Gastrocnemius medialis (tissue), 4 donors: ENCODE measurements at regions of chr1 and their contacts with region 1.

Region 1: DNA sequence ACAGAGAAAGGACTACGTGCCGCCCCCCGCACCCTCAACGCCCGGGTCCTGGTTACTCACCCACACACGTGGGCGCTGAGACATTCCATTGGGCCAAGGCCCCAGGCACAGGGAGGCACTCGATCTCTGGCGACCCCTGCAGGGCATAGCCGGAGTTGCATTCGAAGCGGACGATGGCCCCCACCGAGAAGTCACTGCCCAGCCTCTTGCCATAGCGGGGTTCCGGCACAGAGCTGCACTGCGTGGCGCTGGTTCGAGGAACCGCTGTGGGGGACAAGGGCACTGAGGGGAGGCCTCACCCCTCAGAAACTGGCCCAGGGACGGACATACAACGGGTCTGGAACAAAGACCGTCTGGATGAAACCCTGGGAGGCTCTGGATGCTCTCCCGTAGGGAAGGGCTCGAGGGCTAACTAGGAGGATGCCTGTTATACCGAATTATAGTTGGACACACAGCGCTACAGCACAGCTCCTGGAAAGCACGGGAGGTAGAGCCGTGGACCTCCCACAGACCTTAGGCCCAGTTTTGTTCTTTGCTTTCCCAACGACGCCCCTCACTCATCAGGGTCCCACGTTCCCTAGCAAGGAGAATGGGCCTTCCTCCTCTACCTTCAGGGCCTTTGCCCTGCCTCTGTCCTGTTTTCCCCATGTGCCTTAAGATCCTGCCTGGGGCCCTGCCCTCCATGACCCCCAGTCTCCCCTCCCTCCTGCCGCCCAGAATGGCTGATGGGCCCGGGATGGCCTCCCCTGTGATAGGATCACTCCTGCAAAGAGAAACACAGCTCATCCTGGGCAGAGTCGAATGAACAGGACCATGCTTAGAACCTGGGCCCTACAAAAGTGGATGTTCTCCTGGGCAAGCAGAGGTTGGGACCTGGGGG is 152.8 kb downstream of the ZSCAN20 start:
- DNase-seq: no peak
- ATAC-seq: no peak
- H3K4me3 ChIP-seq: no peak overlapping the region
- H3K27ac ChIP-seq: no peak overlapping the region
- H3K4me1 ChIP-seq: peaks cover 4 to 6% of the 10 kb centered on the region in 2 donors
- H3K27me3 ChIP-seq: no peaks in the 10 kb centered on the region
- CTCF ChIP-seq: no peak
- POLR2A ChIP-seq: no peak

Region 2: DNA sequence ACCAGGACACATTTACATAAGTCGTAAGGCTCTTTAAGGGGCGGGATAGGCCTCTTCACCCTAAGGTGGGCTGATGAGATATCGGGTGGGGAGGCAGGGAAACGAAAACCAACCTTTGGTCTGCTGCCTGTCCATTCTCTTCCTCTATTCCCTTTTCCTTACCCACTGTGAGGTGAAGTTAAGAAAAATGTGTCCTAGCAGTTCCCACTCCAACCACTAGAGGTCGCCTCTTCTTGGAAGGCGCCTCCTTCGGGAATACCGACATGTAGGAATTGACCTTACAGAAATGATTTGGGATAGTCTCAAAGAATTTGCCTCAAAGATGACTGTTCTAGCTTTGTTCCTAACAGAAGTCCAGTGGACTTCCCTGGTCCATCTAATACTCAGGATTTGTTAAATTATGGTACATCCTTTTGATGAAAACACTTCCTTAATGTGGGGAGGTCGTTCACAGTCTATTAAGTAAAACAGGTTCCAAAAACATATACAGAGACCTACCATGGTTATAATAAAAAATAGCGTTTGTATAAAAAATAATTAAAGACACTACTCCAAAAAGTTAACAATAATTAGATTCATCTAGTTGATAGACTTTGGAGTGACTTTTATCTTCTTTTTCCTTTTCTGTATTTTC is 530.1 kb before region 1 on chr1:
- in situ Hi-C with region 1: loop called in 1 of 4 experiments (anchors 25 kb)
- intact Hi-C with region 1: no loop called
- DNase-seq: peak in 1 of 2 donors; percentile 46
- ATAC-seq: peak; percentile 26 to 62
- H3K4me3 ChIP-seq: no peak overlapping the region
- H3K27ac ChIP-seq: no peak overlapping the region
- H3K4me1 ChIP-seq: peaks cover 6 to 9% of the 10 kb centered on the region in 2 donors
- H3K27me3 ChIP-seq: no peaks in the 10 kb centered on the region
- CTCF ChIP-seq: peak; percentile 82 to 98 (median 88)
- POLR2A ChIP-seq: no peak